Uterus (tissue), 4 donors: ENCODE measurements at regions of chr3 and their contacts with region 1.

Region 1: DNA sequence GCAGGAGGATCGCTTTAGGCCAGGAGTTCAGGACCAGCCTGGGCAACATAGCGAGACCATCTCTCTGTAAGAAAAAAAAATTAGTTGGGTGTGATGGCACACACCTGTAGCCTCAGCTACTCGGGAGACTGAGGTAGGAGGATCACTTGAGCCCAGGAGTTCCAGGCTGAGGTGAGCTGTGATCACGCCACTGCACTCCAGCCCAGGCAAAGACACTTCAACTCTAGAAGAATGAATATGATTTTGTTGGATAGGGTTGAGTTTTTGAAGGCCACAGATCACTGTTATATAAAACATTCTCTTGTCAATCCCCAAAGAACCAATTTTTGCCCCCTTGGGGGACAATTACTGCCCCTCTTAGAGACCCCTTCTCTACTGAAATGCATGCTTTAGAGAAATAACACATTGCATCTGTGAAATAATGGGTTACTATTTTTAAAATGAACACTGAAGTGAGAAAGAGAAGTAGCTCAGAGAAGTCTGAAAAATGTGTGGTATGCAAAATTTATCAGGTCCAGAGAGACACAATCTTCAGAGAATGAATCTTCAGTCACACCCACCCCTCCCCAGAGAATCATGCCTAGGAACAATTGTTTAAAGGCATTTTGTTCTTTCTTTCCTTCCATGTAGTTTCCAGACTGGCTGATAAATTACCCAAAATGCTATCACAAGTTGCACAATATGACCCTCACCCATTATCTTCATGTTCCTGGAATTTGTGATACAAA is 42.7 kb downstream of the METTL6 start:
- DNase-seq: no peak
- H3K4me3 ChIP-seq: no peak overlapping the region
- H3K27ac ChIP-seq: no peak overlapping the region
- H3K4me1 ChIP-seq: no peaks in the 10 kb centered on the region
- H3K27me3 ChIP-seq: no peaks in the 10 kb centered on the region
- CTCF ChIP-seq: no peak
- POLR2A ChIP-seq: no peak

Region 2: DNA sequence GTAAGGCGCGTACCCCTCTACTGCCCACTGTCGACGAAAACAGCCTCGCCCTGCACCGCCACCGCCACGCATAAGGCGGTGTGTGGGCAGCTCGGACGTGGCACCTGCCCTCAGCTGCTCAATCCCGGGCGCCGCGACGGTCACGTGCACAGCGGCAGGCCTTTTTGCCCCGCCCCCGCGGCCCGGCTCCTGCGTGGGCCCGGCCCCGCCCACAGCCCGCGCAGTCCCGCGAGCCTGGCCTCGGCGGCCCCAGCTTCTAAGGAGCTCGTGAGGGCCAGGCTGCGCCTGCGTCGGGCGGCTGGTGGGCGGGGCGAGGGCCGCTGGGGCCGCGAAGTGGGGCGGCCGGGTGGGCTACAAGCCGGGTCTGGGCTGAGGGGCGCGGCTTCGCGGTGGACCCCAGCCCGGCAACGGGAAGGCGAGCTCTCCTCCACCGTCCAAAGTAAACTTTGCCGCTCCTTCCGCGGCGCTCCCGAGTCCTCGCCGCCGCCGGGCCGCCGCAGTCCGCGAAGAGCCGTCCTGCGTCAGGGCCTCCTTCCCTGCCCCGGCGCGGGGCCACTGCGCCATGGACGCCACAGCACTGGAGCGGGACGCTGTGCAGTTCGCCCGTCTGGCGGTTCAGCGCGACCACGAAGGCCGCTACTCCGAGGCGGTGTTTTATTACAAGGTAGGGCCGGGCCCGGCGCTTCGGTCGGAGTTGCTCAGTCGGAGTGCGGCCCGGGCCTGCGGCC is 178.6 kb before region 1 on chr3 and contains the start of gene CAPN7:
- intact Hi-C with region 1: loop called (anchors 10 kb)
- DNase-seq: peak; percentile 91 to 93
- H3K4me3 ChIP-seq: peak within 1 kb of the TSS; percentile 69 to 89
- H3K27ac ChIP-seq: peak within 1 kb of the TSS; percentile 95 to 97
- H3K4me1 ChIP-seq: peaks cover 0 to 7% of the 10 kb centered on the region in 2 donors
- H3K27me3 ChIP-seq: no peaks in the 10 kb centered on the region
- CTCF ChIP-seq: peak in 3 of 4 experiments; percentile 51 to 62 (median 56)
- POLR2A ChIP-seq: peak; percentile 89 to 97
- total RNA-seq, gene CAPN7: 39.2 to 89.0 (median 79.8) TPM

Region 3: GRCh38 chr3:15339786-15340215 is 44.9 kb before region 1 on chr3:
- intact Hi-C with region 1: loop called (anchors 5 kb)
- DNase-seq: no peak
- H3K4me3 ChIP-seq: no peak overlapping the region
- H3K27ac ChIP-seq: no peak overlapping the region
- H3K4me1 ChIP-seq: no peaks in the 10 kb centered on the region
- H3K27me3 ChIP-seq: no peaks in the 10 kb centered on the region
- CTCF ChIP-seq: no peak
- POLR2A ChIP-seq: no peak

Region 4: GRCh38 chr3:15572138-15572537 is 187.5 kb after region 1 on chr3:
- intact Hi-C with region 1: no loop called
- DNase-seq: no peak
- H3K4me3 ChIP-seq: no peak overlapping the region
- H3K27ac ChIP-seq: no peak overlapping the region
- H3K4me1 ChIP-seq: no peaks in the 10 kb centered on the region
- H3K27me3 ChIP-seq: no peaks in the 10 kb centered on the region
- CTCF ChIP-seq: no peak
- POLR2A ChIP-seq: no peak